Heart left ventricle (tissue), 16 donors: ENCODE measurements at regions of chr1 and their contacts with region 1.

Region 1: GRCh38 chr1:40890771-40891170 is 28.6 kb upstream of the CITED4 start:
- DNase-seq: no peak
- ATAC-seq: no peak
- H3K4me3 ChIP-seq: no peak overlapping the region
- H3K27ac ChIP-seq: no peak overlapping the region
- H3K4me1 ChIP-seq: no peaks in the 10 kb centered on the region
- H3K27me3 ChIP-seq: peaks cover 0 to 7% (median 0%) of the 10 kb centered on the region in 9 donors
- CTCF ChIP-seq: no peak
- POLR2A ChIP-seq: no peak

Region 2: DNA sequence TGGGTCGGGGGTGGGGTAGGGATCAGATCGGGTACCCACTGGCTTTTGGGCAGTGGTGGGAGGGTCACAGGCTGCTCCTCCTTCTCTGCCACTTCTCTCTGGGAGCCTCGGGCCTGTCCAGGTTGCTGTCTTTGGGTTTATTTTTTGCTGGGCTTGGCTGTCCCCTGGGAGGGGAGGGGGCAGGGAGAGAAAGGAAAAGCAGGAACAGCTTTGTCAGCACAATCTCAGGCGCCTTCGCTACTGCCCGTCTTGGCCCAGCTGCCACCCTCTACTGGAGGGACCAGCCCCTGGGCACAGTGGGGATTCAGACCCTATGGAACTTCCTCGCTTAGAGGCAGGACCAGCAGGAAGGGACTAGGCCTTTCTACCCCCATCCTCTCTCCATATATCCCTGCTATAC is 98.7 kb before region 1 on chr1:
- intact Hi-C with region 1: no loop called
- DNase-seq: no peak
- ATAC-seq: no peak
- H3K4me3 ChIP-seq: no peak overlapping the region
- H3K27ac ChIP-seq: peak overlapping the region in 1 of 12 donors; percentile 62
- H3K4me1 ChIP-seq: peaks cover 0 to 10% (median under 1%) of the 10 kb centered on the region in 12 donors
- H3K27me3 ChIP-seq: no peaks in the 10 kb centered on the region
- CTCF ChIP-seq: no peak
- POLR2A ChIP-seq: no peak

Region 3: GRCh38 chr1:40802078-40802741 is 88.6 kb before region 1 on chr1:
- intact Hi-C with region 1: no loop called
- DNase-seq: peak; percentile 88 to 92 (median 90)
- ATAC-seq: peak; percentile 59 to 91 (median 88)
- H3K4me3 ChIP-seq: peak overlapping the region in 11 of 12 donors; percentile 9 to 59 (median 44)
- H3K27ac ChIP-seq: peak overlapping the region in 11 of 12 donors; percentile 27 to 94 (median 72)
- H3K4me1 ChIP-seq: peaks cover 6 to 53% (median 37%) of the 10 kb centered on the region in 12 donors
- H3K27me3 ChIP-seq: no peaks in the 10 kb centered on the region
- CTCF ChIP-seq: peak in 1 of 12 donors; percentile 5
- POLR2A ChIP-seq: no peak

Region 4: GRCh38 chr1:40932018-40932417 is 41.2 kb after region 1 on chr1:
- intact Hi-C with region 1: loop called in 1 of 10 experiments (anchors 5 kb)
- DNase-seq: peak in 1 of 5 donors; percentile 26
- ATAC-seq: peak in 2 of 4 donors; percentile 38 to 87
- H3K4me3 ChIP-seq: no peak overlapping the region
- H3K27ac ChIP-seq: peak overlapping the region in 1 of 12 donors; percentile 14
- H3K4me1 ChIP-seq: peaks cover 0 to 5% (median 0%) of the 10 kb centered on the region in 12 donors
- H3K27me3 ChIP-seq: no peaks in the 10 kb centered on the region
- CTCF ChIP-seq: no peak
- POLR2A ChIP-seq: no peak

Region 5: GRCh38 chr1:41097105-41097504 is 206.3 kb after region 1 on chr1:
- intact Hi-C with region 1: no loop called
- DNase-seq: no peak
- ATAC-seq: no peak
- H3K4me3 ChIP-seq: no peak overlapping the region
- H3K27ac ChIP-seq: no peak overlapping the region
- H3K4me1 ChIP-seq: peaks cover 6 to 28% (median 15%) of the 10 kb centered on the region in 12 donors
- H3K27me3 ChIP-seq: no peaks in the 10 kb centered on the region
- CTCF ChIP-seq: no peak
- POLR2A ChIP-seq: no peak